ENCODE measurements at regions of chrX and their contacts with region 1.

Region 1: GRCh38 chrX:102599084-102599950 is at the start of gene ARMCX5:
- DNase-seq: peak; percentile 22 to 73 (median 60)
- H3K4me3 ChIP-seq: peak within 1 kb of the TSS; percentile 30 to 77 (median 62)
- H3K27ac ChIP-seq: peak within 1 kb of the TSS in 58 of 59 donors; percentile 23 to 88 (median 70)
- H3K27me3 ChIP-seq: peaks cover 0 to 29% (median 4%) of the 10 kb centered on the region in 45 donors
- CTCF ChIP-seq: peak in 16 of 56 donors; percentile 13 to 34 (median 22)
- total RNA-seq, gene ARMCX5: 4.7 to 24.1 (median 12.2) TPM

Region 2: DNA sequence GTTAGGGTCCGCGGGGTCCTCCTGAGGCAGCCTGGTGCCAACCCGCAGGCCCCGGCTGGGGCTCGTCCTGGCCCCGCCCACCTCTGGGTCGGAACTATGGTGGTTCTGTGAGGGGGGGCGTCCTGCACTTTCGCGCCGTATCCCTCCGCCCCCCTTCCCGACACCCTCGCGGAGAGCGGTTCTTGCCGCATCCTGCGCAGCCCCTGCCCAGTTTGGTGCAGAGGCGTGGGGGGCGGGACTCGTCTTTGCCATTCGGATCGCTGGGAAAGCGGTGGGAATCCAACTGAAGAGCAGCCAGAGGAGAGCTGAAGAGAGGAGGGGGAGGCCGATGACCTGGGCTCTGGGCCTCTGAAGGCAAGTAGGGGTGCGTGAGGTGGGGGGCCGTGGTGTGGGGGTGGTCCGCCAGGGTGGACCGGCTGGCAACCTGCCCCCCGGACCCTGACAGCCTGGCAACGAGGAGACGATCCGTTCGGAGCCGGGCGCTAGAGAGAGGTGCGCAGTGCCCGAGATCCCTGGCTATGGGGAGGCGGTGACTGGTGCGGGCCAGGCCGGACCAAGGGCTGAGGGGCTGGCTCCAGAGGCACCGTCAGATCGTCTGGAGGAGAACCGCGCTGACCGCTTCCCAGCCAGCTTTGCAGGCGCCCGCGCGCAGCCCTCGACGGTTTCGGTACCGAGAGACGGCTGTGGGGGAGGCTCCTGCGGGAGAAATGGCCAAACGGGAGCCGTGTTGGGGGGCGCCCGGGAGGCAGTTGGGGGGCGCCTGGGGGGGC is 52.1 kb after region 1 on chrX and contains the start of gene GPRASP1:
- intact Hi-C with region 1: loop called in 1 of 2 experiments (anchors 2 kb)
- DNase-seq: peak; percentile 40 to 80 (median 65)
- H3K4me3 ChIP-seq: peak within 1 kb of the TSS; percentile 38 to 80 (median 67)
- H3K27ac ChIP-seq: peak within 1 kb of the TSS in 57 of 59 donors; percentile 22 to 91 (median 83)
- H3K27me3 ChIP-seq: peaks cover 0 to 75% (median 5%) of the 10 kb centered on the region in 45 donors
- CTCF ChIP-seq: no peak
- total RNA-seq, gene GPRASP1: 50.9 to 168 (median 113) TPM

Region 3: DNA sequence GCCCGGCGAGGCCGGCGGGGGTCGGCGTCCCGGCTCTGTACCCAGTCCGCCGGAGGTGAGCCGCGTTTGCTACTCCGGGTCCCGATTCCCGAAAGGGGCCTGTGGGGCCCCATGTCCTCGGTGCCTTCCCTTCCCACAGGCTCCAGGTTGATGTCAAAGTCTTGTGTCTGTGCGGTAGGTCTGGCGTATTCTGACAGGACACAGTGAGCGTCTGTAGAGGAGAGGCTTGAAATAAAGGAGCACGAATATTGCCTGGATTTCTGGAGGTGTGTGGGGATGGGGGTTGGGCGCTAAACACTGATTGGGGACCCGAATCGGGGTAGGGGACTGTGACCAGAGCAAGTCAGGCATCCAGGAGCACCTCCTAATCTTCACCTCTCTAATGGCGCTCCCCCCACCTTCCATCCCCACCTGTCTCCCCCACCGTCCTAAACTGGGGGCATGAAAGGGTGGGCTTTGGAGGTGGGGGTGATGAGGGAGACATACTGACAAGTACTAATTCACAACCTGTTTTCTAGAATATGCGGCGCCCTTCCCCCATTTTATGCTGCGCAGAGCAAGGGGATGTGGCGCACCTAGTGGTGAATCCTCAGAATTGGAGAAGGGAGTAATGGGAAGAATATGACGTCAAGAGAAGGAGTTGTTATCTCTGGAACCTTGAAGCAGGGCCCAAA is 113.8 kb after region 1 on chrX:
- intact Hi-C with region 1: loop called (anchors 10 kb)
- DNase-seq: peak in 8 of 10 donors; percentile 50 to 71 (median 64)
- H3K4me3 ChIP-seq: peak overlapping the region; percentile 38 to 81 (median 68)
- H3K27ac ChIP-seq: peak overlapping the region; percentile 6 to 96 (median 89)
- H3K27me3 ChIP-seq: peaks cover 0 to 72% (median 5%) of the 10 kb centered on the region in 45 donors
- CTCF ChIP-seq: peak; percentile 34 to 72 (median 55)

Region 4: DNA sequence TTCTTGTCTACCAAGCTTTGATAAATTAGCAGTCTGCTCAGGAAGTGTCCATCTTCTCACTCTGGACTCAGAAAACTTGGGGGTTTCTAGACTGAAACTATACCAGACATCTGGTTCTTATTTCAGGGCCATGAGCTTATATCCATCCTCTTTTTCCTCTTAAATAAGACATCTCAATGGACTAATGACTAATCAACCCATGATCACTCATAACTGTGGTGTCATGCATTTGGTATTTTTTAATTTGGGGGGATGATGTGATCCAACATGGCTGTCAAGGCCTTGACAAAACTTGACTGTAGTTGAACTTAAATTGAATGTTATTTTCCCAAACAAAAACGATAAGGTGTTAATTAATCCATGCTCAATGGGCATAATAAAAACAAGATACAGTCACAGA is 209.0 kb after region 1 on chrX:
- intact Hi-C with region 1: no loop called
- DNase-seq: no peak
- H3K4me3 ChIP-seq: no peak overlapping the region
- H3K27ac ChIP-seq: no peak overlapping the region
- H3K27me3 ChIP-seq: peaks cover 0 to 33% (median 3%) of the 10 kb centered on the region in 45 donors
- CTCF ChIP-seq: no peak

Measured in dorsolateral prefrontal cortex (tissue), 120 donors.